B cell (primary cell): ENCODE measurements at regions of chr16 and their contacts with region 1.

Region 1: GRCh38 chr16:75148311-75149195 is at the start of gene ZFP1:
- DNase-seq: peak; percentile 95
- ATAC-seq: peak; percentile 86
- H3K4me3 ChIP-seq: peak within 1 kb of the TSS; percentile 54 to 97 (median 95)
- H3K4me3 Mint-ChIP-seq: peak within 1 kb of the TSS; percentile 89
- H3K27ac ChIP-seq: peak within 1 kb of the TSS; percentile 86 to 90
- H3K27ac Mint-ChIP-seq: peak within 1 kb of the TSS; percentile 90
- H3K4me1 ChIP-seq: peaks cover 5 to 7% of the 10 kb centered on the region in 2 donors
- H3K4me1 Mint-ChIP-seq: peaks cover 20% of the 10 kb centered on the region
- H3K27me3 ChIP-seq: peaks cover 0 to 2% (median 0%) of the 10 kb centered on the region in 4 experiments
- H3K27me3 Mint-ChIP-seq: no peaks in the 10 kb centered on the region
- CTCF ChIP-seq: no peak
- total RNA-seq, gene ZFP1: 13.4 and 14.1 TPM in 2 replicates

Region 2: GRCh38 chr16:74296432-74297144 is 852.0 kb before region 1 on chr16 and contains the start of gene PSMD7:
- CTCF ChIA-PET with region 1: no interaction called
- POLR2A ChIA-PET with region 1: no interaction called
- intact Hi-C with region 1: loop called (anchors 10 kb)
- DNase-seq: peak; percentile 94
- ATAC-seq: peak; percentile 90
- H3K4me3 ChIP-seq: peak within 1 kb of the TSS; percentile 74 to 94 (median 93)
- H3K4me3 Mint-ChIP-seq: peak within 1 kb of the TSS; percentile 95
- H3K27ac ChIP-seq: peak within 1 kb of the TSS; percentile 87 to 96
- H3K27ac Mint-ChIP-seq: peak within 1 kb of the TSS; percentile 96
- H3K4me1 ChIP-seq: peaks cover 22 to 26% of the 10 kb centered on the region in 2 donors
- H3K4me1 Mint-ChIP-seq: peaks cover 24% of the 10 kb centered on the region
- H3K27me3 ChIP-seq: no peaks in the 10 kb centered on the region
- H3K27me3 Mint-ChIP-seq: no peaks in the 10 kb centered on the region
- CTCF ChIP-seq: no peak
- total RNA-seq, gene PSMD7: 59.9 and 60.8 TPM in 2 replicates

Region 3: DNA sequence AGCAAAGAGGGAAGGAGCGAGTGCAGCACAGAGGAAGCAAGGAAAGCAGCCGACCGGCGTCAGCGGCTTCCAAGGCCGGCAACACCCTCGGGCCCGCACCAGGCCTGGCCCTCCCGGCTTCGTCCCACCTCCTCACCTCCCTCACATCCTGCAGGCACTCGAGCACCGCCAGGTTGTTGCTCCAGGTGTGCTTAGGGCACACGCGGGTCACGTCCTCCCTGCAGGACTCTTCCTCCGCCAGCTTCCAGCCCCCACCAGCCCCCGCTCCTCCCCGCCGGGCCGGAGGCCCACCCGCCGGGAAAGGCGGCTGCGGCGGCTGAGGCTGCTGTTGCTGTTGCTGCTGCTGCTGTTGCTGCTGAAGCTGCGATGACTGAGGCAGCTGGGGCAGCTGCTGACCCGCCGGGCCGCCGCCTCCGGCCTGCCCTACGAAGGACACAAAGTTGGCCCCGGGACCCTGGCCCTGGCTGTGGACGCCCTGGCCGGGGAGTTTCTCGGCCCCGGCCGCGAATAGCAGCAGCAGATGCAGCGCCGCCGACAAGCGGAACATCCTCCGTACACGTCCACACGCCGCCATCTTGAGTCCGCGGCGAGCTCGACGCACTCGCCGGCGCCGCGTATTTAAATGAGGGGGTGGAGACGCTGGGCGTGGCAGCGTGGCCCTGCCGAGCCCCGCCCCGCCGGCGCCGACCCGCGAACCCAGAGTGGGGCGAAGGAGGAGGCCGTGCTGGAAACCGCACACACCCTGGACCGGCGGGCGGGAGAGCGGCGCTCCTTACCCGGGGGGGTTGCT is 541.8 kb before region 1 on chr16 and contains the start of gene GLG1:
- CTCF ChIA-PET with region 1: no interaction called
- POLR2A ChIA-PET with region 1: no interaction called
- intact Hi-C with region 1: loop called (anchors 2 kb)
- DNase-seq: peak; percentile 95
- ATAC-seq: peak; percentile 96
- H3K4me3 ChIP-seq: peak within 1 kb of the TSS; percentile 61 to 99 (median 93)
- H3K4me3 Mint-ChIP-seq: peak within 1 kb of the TSS; percentile 90
- H3K27ac ChIP-seq: peak within 1 kb of the TSS; percentile 87 to 92
- H3K27ac Mint-ChIP-seq: peak within 1 kb of the TSS; percentile 85
- H3K4me1 ChIP-seq: peaks cover 27 to 28% of the 10 kb centered on the region in 2 donors
- H3K4me1 Mint-ChIP-seq: peaks cover 40% of the 10 kb centered on the region
- H3K27me3 ChIP-seq: no peaks in the 10 kb centered on the region
- H3K27me3 Mint-ChIP-seq: no peaks in the 10 kb centered on the region
- CTCF ChIP-seq: no peak
- total RNA-seq, gene GLG1: 114 and 123 TPM in 2 replicates

Region 4: DNA sequence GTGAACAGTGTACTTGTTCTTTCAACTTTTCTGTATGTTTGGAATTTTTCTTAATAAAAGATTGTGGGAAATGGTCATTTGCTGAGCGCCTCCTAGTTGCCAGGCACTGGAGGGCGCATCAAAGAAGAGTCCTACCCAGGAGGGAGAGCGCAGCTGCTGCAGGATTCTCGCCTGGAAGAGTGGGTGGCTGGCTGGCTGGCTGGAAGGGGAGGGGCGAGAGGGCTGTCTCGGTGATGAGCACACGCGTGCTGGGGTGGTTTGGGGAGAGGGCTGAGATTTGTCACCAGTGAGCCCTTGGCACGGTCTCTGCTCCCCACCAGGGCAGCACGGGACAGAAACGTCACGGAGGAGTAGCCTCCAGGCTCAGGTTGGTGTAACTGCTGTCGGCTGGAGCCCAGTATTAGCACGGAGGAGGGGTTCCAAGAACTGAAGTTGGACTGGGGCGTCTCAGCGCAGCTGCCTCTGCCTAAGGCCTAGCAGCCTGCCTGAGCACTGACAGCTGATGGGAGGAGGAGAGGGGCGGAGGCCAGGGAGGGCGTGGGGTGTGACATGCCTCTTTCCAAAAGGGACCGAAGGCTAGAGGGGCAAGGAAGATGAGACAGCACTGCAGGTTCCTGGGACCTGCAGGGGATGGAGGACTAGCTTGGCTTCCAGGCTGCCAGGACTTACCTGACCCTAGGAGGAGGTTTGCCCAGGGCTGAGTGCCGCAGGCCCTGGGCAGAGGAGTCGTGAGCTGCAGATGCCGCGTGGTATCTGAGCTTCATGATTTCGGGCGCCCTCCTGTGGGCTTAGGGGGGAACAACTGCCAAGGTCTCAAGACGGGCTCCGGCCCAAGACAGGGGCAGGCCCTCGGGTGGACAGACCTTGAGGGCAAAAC is 37.7 kb before region 1 on chr16:
- CTCF ChIA-PET with region 1: no interaction called
- POLR2A ChIA-PET with region 1: no interaction called
- intact Hi-C with region 1: loop called (anchors 1 kb)
- DNase-seq: peak; percentile 87
- ATAC-seq: peak; percentile 85
- H3K4me3 ChIP-seq: peak overlapping the region in 2 of 5 experiments; percentile 4 to 22
- H3K4me3 Mint-ChIP-seq: peak overlapping the region; percentile 73
- H3K27ac ChIP-seq: no peak overlapping the region
- H3K27ac Mint-ChIP-seq: peak overlapping the region; percentile 2
- H3K4me1 ChIP-seq: peaks cover 34 to 38% of the 10 kb centered on the region in 2 donors
- H3K4me1 Mint-ChIP-seq: peaks cover 33% of the 10 kb centered on the region
- H3K27me3 ChIP-seq: peaks cover 0 to 79% (median 34%) of the 10 kb centered on the region in 4 experiments
- H3K27me3 Mint-ChIP-seq: peaks cover 50% of the 10 kb centered on the region
- CTCF ChIP-seq: peak; percentile 88

Region 5: GRCh38 chr16:75206749-75207451 is 58.3 kb after region 1 on chr16 and contains the start of gene CTRB2:
- CTCF ChIA-PET with region 1: no interaction called
- POLR2A ChIA-PET with region 1: no interaction called
- intact Hi-C with region 1: no loop called
- DNase-seq: no peak
- ATAC-seq: no peak
- H3K4me3 ChIP-seq: no peak within 1 kb of the TSS
- H3K4me3 Mint-ChIP-seq: no peak within 1 kb of the TSS
- H3K27ac ChIP-seq: no peak within 1 kb of the TSS
- H3K27ac Mint-ChIP-seq: no peak within 1 kb of the TSS
- H3K4me1 ChIP-seq: no peaks in the 10 kb centered on the region
- H3K4me1 Mint-ChIP-seq: no peaks in the 10 kb centered on the region
- H3K27me3 ChIP-seq: peaks cover 0 to 24% (median 4%) of the 10 kb centered on the region in 4 experiments
- H3K27me3 Mint-ChIP-seq: peaks cover 11% of the 10 kb centered on the region
- CTCF ChIP-seq: no peak
- total RNA-seq, gene CTRB2: not detected in 2 replicates